Panc1 (cell line): ENCODE measurements at regions of chr15 and their contacts with region 1.

Region 1: GRCh38 chr15:69593981-69594966 is 141.7 kb downstream of the RPLP1 start:
- DNase-seq: no peak
- ATAC-seq: peak; percentile 91
- H3K4me3 ChIP-seq: peak overlapping the region in 1 of 2 experiments; percentile 39; a peak in 3 of 4 replicates
- H3K27ac ChIP-seq: peak overlapping the region; percentile 86
- H3K4me1 ChIP-seq: peaks cover 41% of the 10 kb centered on the region
- H3K27me3 ChIP-seq: 0 out of 2 replicates have a peak, but pooled peaks cover 2% of the 10 kb centered on the region
- CTCF ChIP-seq: no peak

Region 2: DNA sequence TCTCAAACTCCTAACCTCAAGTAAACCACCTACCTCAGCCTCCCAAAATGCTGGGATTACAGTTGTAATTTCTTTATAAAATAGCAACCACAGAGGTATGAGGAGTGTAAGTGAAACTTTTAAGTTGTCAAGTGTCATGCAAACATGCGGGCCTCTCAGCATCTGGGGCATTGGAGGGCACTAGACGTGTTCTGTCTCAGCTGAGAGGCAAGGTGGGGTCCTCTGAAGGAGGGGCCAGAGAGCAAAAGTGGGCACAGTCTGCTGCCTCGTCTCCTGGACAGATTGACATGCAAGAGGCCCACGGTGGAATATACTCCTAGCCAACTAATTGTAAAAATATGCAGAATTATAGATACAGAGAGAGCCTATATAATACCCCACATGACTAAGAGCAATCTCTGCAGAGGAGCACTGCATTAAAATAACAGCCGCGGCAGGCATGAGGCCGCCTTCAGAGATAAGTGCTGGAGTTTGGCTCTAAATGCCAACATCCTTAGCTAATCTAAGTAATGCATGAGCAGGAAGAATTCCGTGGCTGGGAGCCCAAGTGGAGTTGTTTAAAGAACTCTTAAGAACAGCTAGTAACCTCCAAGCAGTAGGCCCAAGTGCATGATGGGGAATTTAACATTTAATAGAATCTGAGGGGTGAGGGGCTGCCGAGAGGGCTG is 1666.6 kb before region 1 on chr15:
- CTCF ChIA-PET with region 1: no interaction called
- POLR2A ChIA-PET with region 1: no interaction called
- in situ Hi-C with region 1: no loop called
- intact Hi-C with region 1: loop called (anchors 10 kb)
- DNase-seq: no peak
- ATAC-seq: peak; percentile 94
- H3K4me3 ChIP-seq: no peak overlapping the region
- H3K27ac ChIP-seq: peak overlapping the region; percentile 75
- H3K4me1 ChIP-seq: peaks cover 29% of the 10 kb centered on the region
- H3K27me3 ChIP-seq: no peaks in the 10 kb centered on the region
- CTCF ChIP-seq: no peak

Region 3: GRCh38 chr15:69729161-69729748 is 135.0 kb after region 1 on chr15:
- CTCF ChIA-PET with region 1: interaction called, 14 read pairs
- POLR2A ChIA-PET with region 1: no interaction called
- in situ Hi-C with region 1: no loop called
- intact Hi-C with region 1: loop called (anchors 10 kb)
- DNase-seq: peak; percentile 32
- ATAC-seq: no peak
- H3K4me3 ChIP-seq: no peak overlapping the region
- H3K27ac ChIP-seq: no peak overlapping the region
- H3K4me1 ChIP-seq: no peaks in the 10 kb centered on the region
- H3K27me3 ChIP-seq: no peaks in the 10 kb centered on the region
- CTCF ChIP-seq: peak; percentile 90

Region 4: DNA sequence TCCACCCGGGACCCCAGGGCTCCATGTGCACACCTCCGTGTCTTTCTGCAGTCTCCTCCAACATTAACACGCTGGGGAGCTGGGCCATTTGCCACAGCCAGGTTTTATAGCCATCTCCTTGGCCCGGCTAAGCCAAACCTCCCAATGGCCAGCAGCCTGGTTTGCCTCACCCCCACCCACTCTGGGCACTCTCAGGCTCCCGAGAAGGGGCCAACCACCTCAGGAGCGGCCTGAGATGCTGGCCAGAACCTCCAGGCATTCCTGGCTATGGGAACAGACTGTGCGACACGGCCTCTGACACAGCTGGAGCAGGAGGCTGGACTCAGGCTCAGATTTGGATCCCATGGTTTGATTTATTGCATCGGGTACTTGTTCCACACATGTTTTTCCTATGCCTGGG is 148.1 kb after region 1 on chr15:
- CTCF ChIA-PET with region 1: no interaction called
- POLR2A ChIA-PET with region 1: no interaction called
- in situ Hi-C with region 1: no loop called
- intact Hi-C with region 1: no loop called
- DNase-seq: no peak
- ATAC-seq: no peak
- H3K4me3 ChIP-seq: no peak overlapping the region
- H3K27ac ChIP-seq: no peak overlapping the region
- H3K4me1 ChIP-seq: no peaks in the 10 kb centered on the region
- H3K27me3 ChIP-seq: no peaks in the 10 kb centered on the region
- CTCF ChIP-seq: no peak

Region 5: GRCh38 chr15:70241621-70242320 is 647.5 kb after region 1 on chr15:
- CTCF ChIA-PET with region 1: no interaction called
- POLR2A ChIA-PET with region 1: interaction called, 11 read pairs
- in situ Hi-C with region 1: no loop called
- intact Hi-C with region 1: no loop called
- DNase-seq: no peak
- ATAC-seq: no peak
- H3K4me3 ChIP-seq: no peak overlapping the region
- H3K27ac ChIP-seq: no peak overlapping the region
- H3K4me1 ChIP-seq: peaks cover 9% of the 10 kb centered on the region
- H3K27me3 ChIP-seq: no peaks in the 10 kb centered on the region
- CTCF ChIP-seq: no peak

Region 6: GRCh38 chr15:71386448-71387236 is 1792.4 kb after region 1 on chr15:
- CTCF ChIA-PET with region 1: interaction called, 10 read pairs
- POLR2A ChIA-PET with region 1: no interaction called
- in situ Hi-C with region 1: no loop called
- intact Hi-C with region 1: no loop called
- DNase-seq: no peak
- ATAC-seq: no peak
- H3K4me3 ChIP-seq: no peak overlapping the region
- H3K27ac ChIP-seq: no peak overlapping the region
- H3K4me1 ChIP-seq: no peaks in the 10 kb centered on the region; the same call in 1 of the 2 replicates
- H3K27me3 ChIP-seq: no peaks in the 10 kb centered on the region
- CTCF ChIP-seq: peak; percentile 29; the same call in 1 of the 2 replicates